Activated naive CD4-positive, alpha-beta T cell treated with anti-CD3 and anti-CD28 coated beads for 36 hours (primary cell): ENCODE measurements at regions of chr2 and their contacts with region 1.

Region 1: GRCh38 chr2:197255543-197255942 is 55.0 kb downstream of the ANKRD44 start:
- DNase-seq: peak; percentile 87
- H3K4me3 Mint-ChIP-seq: peak overlapping the region; percentile 75
- H3K27ac Mint-ChIP-seq: peak overlapping the region; percentile 97
- H3K4me1 Mint-ChIP-seq: peaks cover 75% of the 10 kb centered on the region
- H3K27me3 Mint-ChIP-seq: no peaks in the 10 kb centered on the region

Region 2: GRCh38 chr2:197145471-197146138 is 109.9 kb before region 1 on chr2:
- CTCF ChIA-PET with region 1: no interaction called
- intact Hi-C with region 1: loop called (anchors 1 kb)
- DNase-seq: peak; percentile 16
- H3K4me3 Mint-ChIP-seq: no peak overlapping the region
- H3K27ac Mint-ChIP-seq: peak overlapping the region; percentile 85
- H3K4me1 Mint-ChIP-seq: peaks cover 70% of the 10 kb centered on the region
- H3K27me3 Mint-ChIP-seq: no peaks in the 10 kb centered on the region

Region 3: GRCh38 chr2:197209742-197210408 is 45.7 kb before region 1 on chr2:
- CTCF ChIA-PET with region 1: interaction called, 8 read pairs
- intact Hi-C with region 1: loop called (anchors 1 kb)
- DNase-seq: peak; percentile 78
- H3K4me3 Mint-ChIP-seq: peak overlapping the region; percentile 46
- H3K27ac Mint-ChIP-seq: peak overlapping the region; percentile 97
- H3K4me1 Mint-ChIP-seq: peaks cover 99% of the 10 kb centered on the region
- H3K27me3 Mint-ChIP-seq: no peaks in the 10 kb centered on the region

Region 4: GRCh38 chr2:197268786-197269584 is 13.4 kb after region 1 on chr2:
- CTCF ChIA-PET with region 1: interaction called, 17 read pairs
- intact Hi-C with region 1: loop called (anchors 1 kb)
- DNase-seq: peak; percentile 71
- H3K4me3 Mint-ChIP-seq: no peak overlapping the region
- H3K27ac Mint-ChIP-seq: peak overlapping the region; percentile 73
- H3K4me1 Mint-ChIP-seq: peaks cover 93% of the 10 kb centered on the region
- H3K27me3 Mint-ChIP-seq: no peaks in the 10 kb centered on the region

Region 5: GRCh38 chr2:197293252-197294007 is 37.9 kb after region 1 on chr2:
- CTCF ChIA-PET with region 1: interaction called, 5 read pairs
- intact Hi-C with region 1: loop called (anchors 1 kb)
- DNase-seq: peak; percentile 48
- H3K4me3 Mint-ChIP-seq: peak overlapping the region; percentile 57
- H3K27ac Mint-ChIP-seq: peak overlapping the region; percentile 92
- H3K4me1 Mint-ChIP-seq: peaks cover 87% of the 10 kb centered on the region
- H3K27me3 Mint-ChIP-seq: no peaks in the 10 kb centered on the region

Region 6: DNA sequence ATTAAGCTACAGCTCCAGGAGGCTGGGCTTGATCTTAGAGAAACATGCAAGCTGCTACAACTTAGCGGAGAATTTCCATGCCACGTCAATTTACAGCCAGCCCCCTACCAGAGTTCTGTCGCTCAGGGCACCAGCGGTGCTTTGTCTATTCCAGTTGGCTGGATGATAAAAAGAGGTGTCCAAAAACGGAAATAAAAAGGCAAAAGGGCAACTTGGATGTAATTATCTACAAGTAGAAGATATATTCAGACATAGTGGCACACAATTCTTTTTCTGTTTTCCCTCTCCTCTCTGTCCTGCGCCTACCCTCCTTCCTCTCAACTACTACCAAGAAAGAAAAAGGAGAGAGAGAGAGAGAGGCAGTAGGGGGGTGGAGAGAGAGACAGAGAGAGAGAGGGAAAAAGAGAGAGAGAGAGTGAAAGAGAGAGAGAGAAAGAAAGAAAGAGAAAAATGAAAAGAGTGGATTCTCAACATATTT is 420.2 kb after region 1 on chr2:
- CTCF ChIA-PET with region 1: no interaction called
- intact Hi-C with region 1: no loop called
- DNase-seq: no peak
- H3K4me3 Mint-ChIP-seq: no peak overlapping the region
- H3K27ac Mint-ChIP-seq: no peak overlapping the region
- H3K4me1 Mint-ChIP-seq: no peaks in the 10 kb centered on the region
- H3K27me3 Mint-ChIP-seq: peaks cover 2% of the 10 kb centered on the region